Left cardiac atrium (tissue), 4 donors: ENCODE measurements at regions of chr2 and their contacts with region 1.

Region 1: GRCh38 chr2:228056293-228057097 is 125.0 kb downstream of the SPHKAP start:
- DNase-seq: no peak
- ATAC-seq: no peak

Region 2: DNA sequence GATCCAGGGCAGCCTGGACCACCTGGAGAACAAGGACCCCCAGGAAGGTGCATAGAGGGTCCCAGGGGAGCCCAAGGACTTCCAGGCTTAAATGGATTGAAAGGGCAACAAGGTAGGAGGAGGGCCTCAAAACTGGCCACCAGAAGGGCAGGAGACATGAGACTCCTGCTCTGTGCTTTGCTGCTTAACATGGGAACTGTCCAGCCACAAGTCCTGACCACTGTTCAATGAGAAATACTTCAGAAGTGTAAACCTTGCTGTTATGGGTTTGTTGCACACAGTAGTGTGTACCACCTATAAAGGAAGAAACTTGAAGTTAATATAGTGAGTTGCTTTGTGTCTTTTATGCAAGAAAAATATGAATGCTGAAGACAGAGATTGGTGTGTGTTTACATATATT is 775.6 kb before region 1 on chr2:
- intact Hi-C with region 1: loop called in 1 of 2 experiments (anchors 5 kb)
- DNase-seq: no peak
- ATAC-seq: no peak

Region 3: DNA sequence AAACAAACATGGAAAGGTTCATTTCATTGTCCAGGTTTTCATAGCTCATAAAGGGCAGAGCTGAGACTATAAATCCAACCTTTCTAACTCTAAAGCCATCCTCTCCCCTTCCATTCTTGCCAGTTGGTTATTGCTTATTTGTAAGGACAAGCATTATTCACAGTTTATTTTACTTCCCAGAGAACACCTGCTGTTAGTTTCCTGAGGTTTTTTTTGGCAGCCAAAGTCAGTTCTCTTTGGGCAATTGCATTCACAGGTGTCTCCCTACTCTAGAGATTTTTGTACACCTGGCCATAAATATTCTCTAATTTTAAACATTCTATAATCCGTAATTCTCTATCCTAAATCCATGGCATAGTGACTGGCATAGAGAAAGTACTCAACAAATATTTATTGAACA is 212.3 kb after region 1 on chr2:
- intact Hi-C with region 1: no loop called
- DNase-seq: no peak
- ATAC-seq: no peak